ENCODE measurements at regions of chr20 and their contacts with region 1.

Region 1: GRCh38 chr20:45436732-45437391 is 20.9 kb downstream of the PIGT start:
- DNase-seq: peak; percentile 92
- ATAC-seq: peak; percentile 99
- H3K4me3 Mint-ChIP-seq: peak overlapping the region; percentile 73
- H3K27ac Mint-ChIP-seq: no peak overlapping the region
- H3K4me1 Mint-ChIP-seq: peaks cover 17% of the 10 kb centered on the region
- H3K27me3 Mint-ChIP-seq: no peaks in the 10 kb centered on the region
- CTCF ChIP-seq: peak; percentile 97

Region 2: GRCh38 chr20:45293041-45294002 is 143.5 kb before region 1 on chr20:
- CTCF ChIA-PET with region 1: interaction called, 27 read pairs
- POLR2A ChIA-PET with region 1: no interaction called
- intact Hi-C with region 1: no loop called
- DNase-seq: peak; percentile 91
- ATAC-seq: peak; percentile 92
- H3K4me3 Mint-ChIP-seq: peak overlapping the region; percentile 69
- H3K27ac Mint-ChIP-seq: no peak overlapping the region
- H3K4me1 Mint-ChIP-seq: peaks cover 2% of the 10 kb centered on the region
- H3K27me3 Mint-ChIP-seq: peaks cover 31% of the 10 kb centered on the region
- CTCF ChIP-seq: peak; percentile 98

Region 3: GRCh38 chr20:45322952-45323383 is 113.9 kb before region 1 on chr20:
- CTCF ChIA-PET with region 1: interaction called, 79 read pairs
- POLR2A ChIA-PET with region 1: interaction called, 3 read pairs
- intact Hi-C with region 1: loop called (anchors 2 kb)
- DNase-seq: peak; percentile 43
- ATAC-seq: no peak
- H3K4me3 Mint-ChIP-seq: no peak overlapping the region
- H3K27ac Mint-ChIP-seq: no peak overlapping the region
- H3K4me1 Mint-ChIP-seq: peaks cover 25% of the 10 kb centered on the region
- H3K27me3 Mint-ChIP-seq: no peaks in the 10 kb centered on the region
- CTCF ChIP-seq: no peak

Region 4: DNA sequence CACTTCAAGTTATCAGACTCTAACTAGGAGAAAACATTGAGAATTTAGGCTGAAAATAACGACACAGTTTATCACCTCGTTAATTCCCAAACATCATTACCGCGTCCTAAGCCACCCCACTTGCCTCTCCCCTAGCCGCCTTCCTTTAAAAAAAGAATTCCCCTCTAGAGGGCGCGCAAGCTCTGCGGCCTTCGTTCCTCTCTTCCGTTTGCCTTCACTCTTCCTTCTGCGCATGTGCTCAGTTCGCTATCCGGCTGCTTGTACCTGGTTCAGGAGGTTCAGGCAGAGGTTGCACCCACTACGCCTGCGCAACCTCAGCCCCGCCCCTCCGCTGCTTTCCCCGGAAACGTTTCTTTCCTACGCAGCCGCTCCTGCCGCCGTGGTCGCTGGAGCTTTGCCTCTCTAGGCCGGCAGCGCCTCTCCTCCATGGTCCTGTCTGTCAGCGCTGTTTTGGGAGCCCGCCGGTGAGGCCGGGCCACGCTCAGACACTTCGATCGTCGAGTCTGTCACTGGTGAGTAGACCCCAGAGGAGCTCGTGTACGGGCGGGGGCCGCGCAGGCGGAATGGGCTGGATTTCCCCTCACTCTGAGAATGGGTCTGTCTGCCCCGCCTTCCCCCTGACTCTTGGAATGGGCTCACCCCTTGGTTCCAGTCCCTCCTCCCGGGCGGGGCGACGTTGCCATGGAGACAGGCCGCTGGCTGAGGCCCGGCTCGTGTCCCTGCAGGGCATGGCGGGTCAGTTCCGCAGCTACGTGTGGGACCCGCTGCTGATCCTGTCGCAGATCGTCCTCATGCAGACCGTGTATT is 73.9 kb before region 1 on chr20 and contains the start of gene SYS1:
- CTCF ChIA-PET with region 1: interaction called, 549 read pairs
- POLR2A ChIA-PET with region 1: interaction called, 6 read pairs
- intact Hi-C with region 1: loop called (anchors 2 kb)
- DNase-seq: peak; percentile 98
- ATAC-seq: peak; percentile 90
- H3K4me3 Mint-ChIP-seq: peak within 1 kb of the TSS; percentile 100
- H3K27ac Mint-ChIP-seq: peak within 1 kb of the TSS; percentile 98
- H3K4me1 Mint-ChIP-seq: peaks cover 48% of the 10 kb centered on the region
- H3K27me3 Mint-ChIP-seq: no peaks in the 10 kb centered on the region
- CTCF ChIP-seq: peak; percentile 89
- total RNA-seq, gene SYS1: 19.6 to 20.7 TPM

Region 5: DNA sequence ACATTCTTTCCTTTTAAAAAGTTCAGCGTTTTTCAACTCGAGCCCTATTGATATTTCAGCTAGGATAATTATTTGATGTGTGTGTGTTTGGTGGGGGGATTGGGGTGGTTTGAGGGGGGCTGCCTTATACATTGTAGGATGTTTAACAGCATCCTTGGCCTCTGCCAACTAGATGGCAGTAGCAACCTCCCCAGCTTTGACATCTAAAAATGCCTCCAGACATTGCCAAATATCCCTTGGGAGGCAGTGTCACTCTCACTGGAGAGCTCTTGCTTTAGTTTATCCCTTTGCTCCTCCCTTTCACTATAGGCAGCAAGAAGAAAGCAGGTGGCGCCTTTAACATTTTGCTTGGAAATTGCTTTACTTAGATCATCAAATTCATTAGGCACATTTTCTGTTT is 44.1 kb before region 1 on chr20:
- CTCF ChIA-PET with region 1: interaction called, 14 read pairs
- POLR2A ChIA-PET with region 1: no interaction called
- intact Hi-C with region 1: no loop called
- DNase-seq: no peak
- ATAC-seq: no peak
- H3K4me3 Mint-ChIP-seq: no peak overlapping the region
- H3K27ac Mint-ChIP-seq: no peak overlapping the region
- H3K4me1 Mint-ChIP-seq: peaks cover 13% of the 10 kb centered on the region
- H3K27me3 Mint-ChIP-seq: no peaks in the 10 kb centered on the region
- CTCF ChIP-seq: no peak

Region 6: DNA sequence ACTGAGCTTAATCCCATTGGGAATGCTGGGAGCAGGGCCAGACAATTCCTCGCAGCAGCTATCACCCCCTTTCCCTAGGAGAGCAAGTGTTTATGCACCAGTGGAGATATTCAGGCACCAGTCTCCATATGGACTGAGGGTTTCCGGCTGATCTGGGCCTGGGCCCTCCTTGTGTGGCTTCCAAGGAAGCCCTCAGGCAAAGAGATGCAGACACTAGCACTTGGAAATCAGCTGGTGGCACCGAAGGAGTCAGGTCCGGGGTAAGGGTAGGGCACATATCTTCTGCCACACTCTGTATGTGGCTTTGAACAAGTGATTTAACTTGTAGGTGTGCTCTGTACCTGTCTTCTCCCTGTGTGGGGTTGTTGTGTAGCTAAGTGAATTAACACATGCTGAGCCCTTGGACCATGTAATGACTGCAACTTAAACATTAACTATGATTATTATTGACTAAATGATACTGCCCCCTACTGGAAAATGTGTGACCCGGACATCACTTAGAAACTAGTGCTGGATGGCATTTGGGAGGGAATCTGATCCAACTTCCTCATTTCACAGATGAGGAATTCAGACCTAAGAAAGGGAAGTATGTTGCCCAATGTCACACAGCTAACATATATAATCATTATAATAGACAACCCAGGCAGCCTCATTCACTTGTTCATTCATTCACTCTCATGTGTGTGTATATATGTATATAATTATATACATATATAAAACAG is 13.4 kb after region 1 on chr20:
- CTCF ChIA-PET with region 1: interaction called, 93 read pairs
- POLR2A ChIA-PET with region 1: interaction called, 3 read pairs
- intact Hi-C with region 1: no loop called
- DNase-seq: peak; percentile 28
- ATAC-seq: peak; percentile 66
- H3K4me3 Mint-ChIP-seq: no peak overlapping the region
- H3K27ac Mint-ChIP-seq: no peak overlapping the region
- H3K4me1 Mint-ChIP-seq: peaks cover 2% of the 10 kb centered on the region
- H3K27me3 Mint-ChIP-seq: peaks cover 2% of the 10 kb centered on the region
- CTCF ChIP-seq: peak; percentile 79

Region 7: GRCh38 chr20:45581702-45582101 is 144.8 kb after region 1 on chr20:
- CTCF ChIA-PET with region 1: no interaction called
- POLR2A ChIA-PET with region 1: no interaction called
- intact Hi-C with region 1: no loop called
- DNase-seq: no peak
- ATAC-seq: no peak
- H3K4me3 Mint-ChIP-seq: no peak overlapping the region
- H3K27ac Mint-ChIP-seq: no peak overlapping the region
- H3K4me1 Mint-ChIP-seq: no peaks in the 10 kb centered on the region
- H3K27me3 Mint-ChIP-seq: peaks cover 13% of the 10 kb centered on the region
- CTCF ChIP-seq: no peak